ENCODE measurements at regions of chr9 and their contacts with region 1.

Region 1: GRCh38 chr9:97921959-97922724 is at the start of gene TRMO:
- DNase-seq: peak; percentile 92 to 98
- H3K4me3 ChIP-seq: peak within 1 kb of the TSS; percentile 48 to 68 (median 54)
- H3K27ac ChIP-seq: peak within 1 kb of the TSS; percentile 66
- H3K4me1 ChIP-seq: no peaks in the 10 kb centered on the region; a peak in 1 of 7 replicates
- H3K27me3 ChIP-seq: no peaks in the 10 kb centered on the region; a peak in 2 of 7 replicates
- CTCF ChIP-seq: peak; percentile 57 to 76 (median 62)
- EP300 ChIP-seq: peak in 1 of 2 experiments; percentile 62; a peak in 1 of 3 replicates
- POLR2A ChIP-seq: peak; percentile 87 to 90
- RAD21 ChIP-seq: peak; percentile 40 to 48
- total RNA-seq, gene TRMO: 4.7 and 5.6 TPM in 2 replicates

Region 2: GRCh38 chr9:97908705-97909104 is 13.4 kb before region 1 on chr9:
- CTCF ChIA-PET with region 1: interaction called, 12 read pairs
- POLR2A ChIA-PET with region 1: interaction called, 9 read pairs
- DNase-seq: no peak
- H3K4me3 ChIP-seq: no peak overlapping the region
- H3K27ac ChIP-seq: no peak overlapping the region
- H3K4me1 ChIP-seq: no peaks in the 10 kb centered on the region
- H3K27me3 ChIP-seq: no peaks in the 10 kb centered on the region
- CTCF ChIP-seq: no peak
- EP300 ChIP-seq: no peak
- POLR2A ChIP-seq: no peak
- RAD21 ChIP-seq: no peak

Region 3: GRCh38 chr9:97934321-97935115 is 12.4 kb after region 1 on chr9:
- CTCF ChIA-PET with region 1: interaction called, 9 read pairs
- POLR2A ChIA-PET with region 1: interaction called, 12 read pairs
- DNase-seq: no peak
- H3K4me3 ChIP-seq: no peak overlapping the region
- H3K27ac ChIP-seq: no peak overlapping the region
- H3K4me1 ChIP-seq: no peaks in the 10 kb centered on the region; a peak in 1 of 7 replicates
- H3K27me3 ChIP-seq: peaks cover 0 to 10% (median 5%) of the 10 kb centered on the region in 4 experiments; a peak in 5 of 7 replicates
- CTCF ChIP-seq: no peak
- EP300 ChIP-seq: no peak
- POLR2A ChIP-seq: no peak
- RAD21 ChIP-seq: no peak

Region 4: DNA sequence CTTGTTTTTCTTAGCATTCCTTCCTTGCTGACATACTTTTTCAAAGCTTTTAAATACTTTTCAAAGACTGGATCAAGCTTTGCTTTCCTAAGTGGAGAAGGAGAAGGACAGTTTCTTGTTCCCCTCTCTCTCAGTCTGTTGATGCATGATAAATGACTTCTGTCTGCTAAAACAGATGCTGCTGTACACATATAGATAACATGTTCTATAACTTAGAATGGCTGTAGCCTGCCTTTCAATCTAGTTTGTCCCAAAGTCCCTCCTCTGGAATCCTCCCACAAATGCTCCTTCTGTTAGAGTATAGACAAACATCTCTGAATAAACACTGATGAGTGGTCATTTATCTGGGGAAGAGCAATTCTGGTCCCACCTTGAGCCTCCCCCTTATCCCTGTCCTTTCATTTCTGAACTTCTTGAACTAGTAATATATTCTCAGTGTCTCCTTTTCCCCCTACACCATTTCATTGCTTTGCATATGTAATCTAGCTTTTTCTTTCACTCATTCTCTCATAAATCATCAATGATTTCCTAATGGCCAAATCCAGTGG is 21.2 kb after region 1 on chr9:
- CTCF ChIA-PET with region 1: interaction called, 14 read pairs
- POLR2A ChIA-PET with region 1: no interaction called
- DNase-seq: no peak
- H3K4me3 ChIP-seq: no peak overlapping the region
- H3K27ac ChIP-seq: no peak overlapping the region
- H3K4me1 ChIP-seq: no peaks in the 10 kb centered on the region
- H3K27me3 ChIP-seq: peaks cover 0 to 24% (median 7%) of the 10 kb centered on the region in 4 experiments; a peak in 5 of 7 replicates
- CTCF ChIP-seq: no peak
- EP300 ChIP-seq: no peak
- POLR2A ChIP-seq: no peak
- RAD21 ChIP-seq: no peak

Region 5: DNA sequence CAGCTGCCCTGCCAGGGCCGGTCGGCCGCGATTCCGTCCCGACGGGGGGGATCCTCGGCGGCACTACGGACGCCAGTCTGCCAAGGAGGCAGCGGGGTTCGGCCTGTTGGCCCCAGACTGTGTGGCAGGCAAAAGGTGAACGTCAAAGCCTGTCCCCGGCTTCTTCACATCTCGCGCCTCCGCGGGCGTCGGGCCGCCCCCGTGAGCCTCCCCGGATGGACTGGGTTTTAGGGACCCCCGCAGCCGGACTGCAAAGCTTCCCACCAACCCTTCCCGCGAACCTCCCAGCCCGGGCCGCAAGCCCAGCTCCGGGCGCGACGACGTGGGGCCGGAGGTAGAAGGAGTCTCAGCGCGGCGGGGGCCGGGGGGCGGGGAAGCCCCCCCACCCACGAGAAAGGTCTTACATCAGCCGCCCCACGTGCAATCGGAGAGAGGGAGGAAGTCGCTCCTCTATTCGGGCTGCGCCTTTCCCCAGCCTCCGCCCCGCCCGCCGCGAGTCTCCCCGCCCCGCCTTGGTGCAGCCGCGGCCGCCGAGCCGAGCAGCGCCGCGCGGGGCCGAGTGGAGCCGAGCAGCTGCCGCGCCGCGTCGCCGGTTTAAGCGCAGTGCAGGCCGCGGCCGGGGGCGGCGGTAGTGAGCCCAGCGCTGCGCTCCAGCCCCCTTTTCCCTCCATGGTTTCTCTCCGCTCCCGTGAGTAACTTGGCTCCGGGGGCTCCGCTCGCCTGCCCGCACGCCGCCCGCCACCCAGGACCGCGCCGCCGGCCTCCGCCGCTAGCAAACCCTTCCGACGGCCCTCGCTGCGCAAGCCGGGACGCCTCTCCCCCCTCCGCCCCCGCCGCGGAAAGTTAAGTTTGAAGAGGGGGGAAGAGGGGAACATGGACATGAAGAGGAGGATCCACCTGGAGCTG is 60.8 kb after region 1 on chr9 and contains the start of gene ANP32B:
- CTCF ChIA-PET with region 1: interaction called, 4 read pairs
- POLR2A ChIA-PET with region 1: interaction called, 21 read pairs
- DNase-seq: peak; percentile 46 to 94
- H3K4me3 ChIP-seq: peak within 1 kb of the TSS; percentile 62 to 95 (median 68)
- H3K27ac ChIP-seq: peak within 1 kb of the TSS; percentile 64; the same call in 1 of the 2 replicates
- H3K4me1 ChIP-seq: peaks cover 0 to 7% (median 2%) of the 10 kb centered on the region in 4 experiments; a peak in 2 of 7 replicates
- H3K27me3 ChIP-seq: peaks cover 42 to 75% (median 62%) of the 10 kb centered on the region in 4 experiments
- CTCF ChIP-seq: peak; percentile 80 to 94 (median 86)
- EP300 ChIP-seq: no peak
- POLR2A ChIP-seq: no peak; a peak in 1 of 3 replicates
- RAD21 ChIP-seq: peak in 1 of 2 experiments; percentile 33; a peak in 1 of 4 replicates
- total RNA-seq, gene ANP32B: 77.0 and 88.1 TPM in 2 replicates

Region 6: GRCh38 chr9:98056269-98057137 is 134.4 kb after region 1 on chr9 and contains the start of gene NANS:
- CTCF ChIA-PET with region 1: interaction called, 10 read pairs
- POLR2A ChIA-PET with region 1: interaction called, 5 read pairs
- DNase-seq: peak; percentile 73 to 92
- H3K4me3 ChIP-seq: peak within 1 kb of the TSS; percentile 57 to 94 (median 83)
- H3K27ac ChIP-seq: peak within 1 kb of the TSS; percentile 76; the same call in 1 of the 2 replicates
- H3K4me1 ChIP-seq: peaks cover 0 to 4% (median 2%) of the 10 kb centered on the region in 4 experiments; a peak in 1 of 7 replicates
- H3K27me3 ChIP-seq: peaks cover 0 to 3% (median 0%) of the 10 kb centered on the region in 4 experiments; a peak in 2 of 7 replicates
- CTCF ChIP-seq: no peak
- EP300 ChIP-seq: no peak
- POLR2A ChIP-seq: peak; percentile 84 to 85
- RAD21 ChIP-seq: 0 out of 4 replicates have a peak, but pooled peaks of 1 of the 2 experiments have one; percentile 1
- total RNA-seq, gene NANS: 64.0 and 67.3 TPM in 2 replicates

Region 7: DNA sequence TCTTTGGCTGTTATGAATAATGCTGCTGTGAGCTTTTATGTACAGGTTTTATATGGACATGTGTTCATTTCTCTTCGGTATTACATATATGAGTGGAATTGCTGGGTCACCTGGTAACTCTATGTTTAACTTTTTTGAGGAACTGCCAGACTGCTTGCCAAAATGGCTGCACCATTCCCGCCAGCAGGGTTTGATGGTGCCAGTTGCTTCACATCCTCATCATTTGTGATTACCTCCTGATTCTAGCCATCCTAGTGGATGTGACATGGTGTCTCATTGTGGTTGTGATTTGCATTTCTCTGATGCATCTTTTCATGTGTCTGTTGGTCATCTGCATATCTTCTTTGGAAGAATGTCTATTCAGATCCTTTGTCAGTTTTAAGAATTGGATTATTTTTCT is 145.0 kb after region 1 on chr9:
- CTCF ChIA-PET with region 1: no interaction called
- POLR2A ChIA-PET with region 1: no interaction called
- DNase-seq: no peak
- H3K4me3 ChIP-seq: no peak overlapping the region
- H3K27ac ChIP-seq: no peak overlapping the region
- H3K4me1 ChIP-seq: no peaks in the 10 kb centered on the region; a peak in 1 of 7 replicates
- H3K27me3 ChIP-seq: no peaks in the 10 kb centered on the region
- CTCF ChIP-seq: no peak
- EP300 ChIP-seq: no peak
- POLR2A ChIP-seq: no peak
- RAD21 ChIP-seq: no peak